Calu3 (cell line): ENCODE measurements at regions of chr2 and their contacts with region 1.

Region 1: DNA sequence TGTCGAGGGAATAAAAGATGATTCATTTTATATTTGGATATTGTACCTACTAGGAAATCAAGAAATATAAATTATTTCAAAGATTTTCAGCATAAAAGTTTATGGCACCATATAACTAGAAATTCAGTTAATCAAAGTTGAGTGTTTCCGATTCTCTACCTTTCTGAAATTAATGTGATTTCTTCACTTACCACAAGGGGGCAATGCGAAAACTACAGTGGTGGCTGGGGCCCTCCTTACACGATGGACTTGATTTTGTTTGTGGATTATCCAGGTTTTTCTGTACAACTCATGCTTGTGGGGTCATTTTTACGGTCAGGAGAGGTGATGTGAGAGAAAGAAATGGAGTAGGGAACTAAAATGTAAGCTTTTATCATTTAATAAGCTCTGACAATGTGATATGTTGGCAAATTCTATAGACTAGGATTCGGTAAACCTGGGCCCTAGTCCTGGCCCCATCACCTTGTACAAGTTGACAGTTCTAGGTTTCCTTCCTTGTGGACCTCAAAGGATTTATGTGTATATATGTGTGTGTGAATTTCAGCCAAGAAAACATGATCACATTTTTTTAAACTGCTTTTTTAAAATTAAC is 47.6 kb downstream of the G6PC2 start:
- DNase-seq: peak; percentile 61
- H3K4me3 Mint-ChIP-seq: no peak overlapping the region
- H3K27ac Mint-ChIP-seq: no peak overlapping the region
- H3K4me1 Mint-ChIP-seq: peaks cover 20% of the 10 kb centered on the region
- H3K27me3 Mint-ChIP-seq: no peaks in the 10 kb centered on the region
- CTCF ChIP-seq: peak; percentile 86

Region 2: GRCh38 chr2:168920504-168921157 is 28.1 kb before region 1 on chr2:
- CTCF ChIA-PET with region 1: no interaction called
- intact Hi-C with region 1: loop called (anchors 2 kb)
- DNase-seq: peak; percentile 44
- H3K4me3 Mint-ChIP-seq: no peak overlapping the region
- H3K27ac Mint-ChIP-seq: no peak overlapping the region
- H3K4me1 Mint-ChIP-seq: peaks cover 14% of the 10 kb centered on the region
- H3K27me3 Mint-ChIP-seq: no peaks in the 10 kb centered on the region
- CTCF ChIP-seq: peak; percentile 68

Region 3: DNA sequence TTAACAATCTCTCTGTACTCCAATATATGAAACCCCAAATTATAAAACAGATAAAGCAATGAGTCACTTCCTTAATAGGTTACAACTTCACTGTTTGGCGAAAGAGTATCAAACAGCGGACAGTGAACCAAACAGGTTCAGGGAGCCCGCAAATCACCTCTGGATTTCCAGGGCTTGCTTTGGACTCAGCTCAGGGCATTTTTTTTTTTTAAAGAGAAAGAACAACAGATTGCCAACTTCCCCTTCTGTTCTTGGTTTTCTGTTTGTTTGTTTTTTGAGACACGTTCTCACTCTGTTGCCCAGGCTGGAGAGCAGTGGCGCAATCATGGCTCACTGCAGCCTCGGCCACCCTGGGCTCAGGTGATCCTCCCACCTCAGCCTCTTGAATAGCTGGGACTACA is 29.7 kb after region 1 on chr2:
- CTCF ChIA-PET with region 1: no interaction called
- intact Hi-C with region 1: no loop called
- DNase-seq: peak; percentile 77
- H3K4me3 Mint-ChIP-seq: no peak overlapping the region
- H3K27ac Mint-ChIP-seq: peak overlapping the region; percentile 45
- H3K4me1 Mint-ChIP-seq: peaks cover 42% of the 10 kb centered on the region
- H3K27me3 Mint-ChIP-seq: no peaks in the 10 kb centered on the region
- CTCF ChIP-seq: no peak

Region 4: DNA sequence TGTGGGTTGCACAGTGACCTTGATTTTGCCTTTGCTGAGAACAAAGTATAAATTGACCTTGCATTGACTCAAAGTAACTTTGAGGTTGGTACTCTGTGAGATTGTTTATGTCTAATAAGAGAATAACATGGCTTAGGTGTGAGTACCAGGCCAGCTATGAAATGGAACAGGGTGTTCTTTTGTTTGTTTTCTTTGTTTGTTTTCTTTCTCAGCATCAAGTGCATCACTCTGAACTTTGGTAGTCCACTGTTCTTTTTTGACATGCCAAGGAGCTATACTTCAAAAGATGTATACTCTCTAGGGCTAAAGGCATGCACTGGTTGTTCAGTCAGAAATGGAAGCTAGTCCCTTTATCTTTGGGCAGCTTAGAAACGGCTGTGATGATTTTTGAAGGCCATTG is 77.3 kb after region 1 on chr2:
- CTCF ChIA-PET with region 1: no interaction called
- intact Hi-C with region 1: no loop called
- DNase-seq: no peak
- H3K4me3 Mint-ChIP-seq: no peak overlapping the region
- H3K27ac Mint-ChIP-seq: no peak overlapping the region
- H3K4me1 Mint-ChIP-seq: peaks cover 19% of the 10 kb centered on the region
- H3K27me3 Mint-ChIP-seq: no peaks in the 10 kb centered on the region
- CTCF ChIP-seq: no peak

Region 5: DNA sequence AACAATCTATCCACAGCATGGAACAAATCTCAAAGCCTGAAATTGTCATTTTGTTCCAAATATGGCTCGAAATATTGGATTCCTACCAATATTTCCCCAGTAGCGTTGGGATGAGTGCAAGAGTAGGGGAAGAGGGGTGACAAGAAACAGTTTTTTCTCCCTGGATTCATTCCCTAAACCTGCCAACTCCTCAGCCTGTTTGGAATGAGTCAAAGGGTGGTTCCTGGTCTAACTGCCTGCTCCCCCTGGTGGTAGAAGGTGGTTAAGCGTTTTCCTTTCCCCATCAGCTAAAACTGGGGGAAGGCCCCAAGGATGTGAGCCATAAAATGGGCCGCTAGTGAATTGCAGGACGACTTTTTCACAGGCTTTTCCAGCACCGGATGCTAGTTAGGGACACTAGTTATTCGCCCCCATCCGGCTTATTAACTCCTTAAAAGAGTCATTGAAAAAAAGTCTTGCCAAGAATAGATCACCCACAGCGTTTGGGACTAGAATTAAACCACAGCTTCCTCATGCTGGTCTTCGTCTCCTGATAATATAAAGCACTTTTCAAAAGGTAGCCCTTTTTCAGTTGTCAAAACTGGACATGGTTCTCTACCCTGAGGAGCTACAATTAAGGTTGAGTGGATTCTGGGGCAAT is 193.1 kb after region 1 on chr2:
- CTCF ChIA-PET with region 1: no interaction called
- intact Hi-C with region 1: loop called (anchors 5 kb)
- DNase-seq: peak; percentile 78
- H3K4me3 Mint-ChIP-seq: no peak overlapping the region
- H3K27ac Mint-ChIP-seq: no peak overlapping the region
- H3K4me1 Mint-ChIP-seq: peaks cover 7% of the 10 kb centered on the region
- H3K27me3 Mint-ChIP-seq: no peaks in the 10 kb centered on the region
- CTCF ChIP-seq: peak; percentile 86

Region 6: DNA sequence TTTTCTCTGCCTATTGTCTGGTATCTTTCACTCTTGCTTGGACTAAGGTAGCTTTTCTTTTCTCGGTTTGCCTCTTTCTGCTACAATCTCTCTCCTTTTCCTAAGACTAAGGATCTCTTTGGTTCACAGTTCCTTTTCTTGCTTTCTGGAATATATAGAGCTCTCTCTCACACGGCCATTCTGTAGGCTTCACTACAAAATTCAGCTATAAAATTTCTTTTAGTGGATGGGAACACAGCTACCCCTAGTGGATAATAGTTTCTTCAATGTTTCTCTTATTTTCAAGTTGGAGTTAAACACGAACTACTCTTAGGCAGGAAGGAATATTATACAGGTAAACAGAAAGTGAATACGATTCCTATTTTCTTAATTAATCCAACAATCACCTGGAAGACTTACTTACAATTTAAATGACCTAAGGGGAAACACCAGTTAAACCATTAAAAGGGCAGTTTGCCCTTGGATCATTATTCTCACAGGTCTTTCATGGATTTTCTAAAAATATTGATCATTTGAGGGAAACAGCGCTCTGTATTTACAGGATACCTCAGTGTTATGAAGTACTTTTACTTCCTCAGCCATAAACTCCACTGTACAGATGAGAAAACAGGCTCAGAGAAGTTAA is 273.1 kb after region 1 on chr2:
- CTCF ChIA-PET with region 1: interaction called, 8 read pairs
- intact Hi-C with region 1: loop called (anchors 5 kb)
- DNase-seq: no peak
- H3K4me3 Mint-ChIP-seq: no peak overlapping the region
- H3K27ac Mint-ChIP-seq: no peak overlapping the region
- H3K4me1 Mint-ChIP-seq: no peaks in the 10 kb centered on the region
- H3K27me3 Mint-ChIP-seq: no peaks in the 10 kb centered on the region
- CTCF ChIP-seq: peak; percentile 23

Region 7: GRCh38 chr2:169275696-169276444 is 327.2 kb after region 1 on chr2:
- CTCF ChIA-PET with region 1: interaction called, 3 read pairs
- intact Hi-C with region 1: loop called (anchors 5 kb)
- DNase-seq: peak; percentile 32
- H3K4me3 Mint-ChIP-seq: no peak overlapping the region
- H3K27ac Mint-ChIP-seq: no peak overlapping the region
- H3K4me1 Mint-ChIP-seq: no peaks in the 10 kb centered on the region
- H3K27me3 Mint-ChIP-seq: peaks cover 20% of the 10 kb centered on the region
- CTCF ChIP-seq: no peak

Region 8: GRCh38 chr2:169397697-169398096 is 449.0 kb after region 1 on chr2:
- CTCF ChIA-PET with region 1: no interaction called
- intact Hi-C with region 1: loop called (anchors 10 kb)
- DNase-seq: no peak
- H3K4me3 Mint-ChIP-seq: no peak overlapping the region
- H3K27ac Mint-ChIP-seq: no peak overlapping the region
- H3K4me1 Mint-ChIP-seq: no peaks in the 10 kb centered on the region
- H3K27me3 Mint-ChIP-seq: peaks cover 63% of the 10 kb centered on the region
- CTCF ChIP-seq: no peak